ENCODE measurements at regions of chr12 and their contacts with region 1.

Region 1: GRCh38 chr12:52156736-52157565 is 34.9 kb downstream of the KRT80 start:
- DNase-seq: peak; percentile 86
- ATAC-seq: peak; percentile 74

Region 2: DNA sequence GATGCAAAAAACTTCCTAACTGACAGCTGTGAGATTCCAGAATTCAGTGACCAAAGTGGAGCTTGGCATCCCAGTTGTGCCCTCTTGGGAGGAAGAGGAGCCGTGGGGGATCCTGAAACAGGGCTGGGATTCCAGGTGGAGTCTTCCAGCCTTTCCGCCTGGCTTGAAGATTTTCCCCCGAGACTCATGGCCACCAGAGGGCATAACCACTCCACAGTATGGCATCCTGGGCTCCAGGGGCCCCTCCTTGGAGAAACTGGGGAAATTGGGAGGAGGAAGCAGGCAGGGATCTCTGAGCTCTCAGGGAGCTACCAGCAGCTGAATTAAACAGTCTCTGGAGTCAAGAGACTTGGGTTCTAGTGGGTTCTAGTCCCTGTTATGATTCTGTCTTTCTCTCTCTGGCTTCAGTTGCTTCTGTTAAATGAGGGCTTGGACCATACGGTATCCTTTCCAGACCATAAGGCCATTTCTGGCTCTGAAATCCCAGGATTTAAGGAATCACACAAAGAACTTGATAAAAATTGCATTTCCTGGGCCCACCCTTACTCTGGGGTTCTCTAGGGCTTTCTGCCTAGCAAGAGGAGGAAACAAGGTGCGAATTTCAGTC is 152.8 kb before region 1 on chr12:
- intact Hi-C with region 1: no loop called
- DNase-seq: peak; percentile 63
- ATAC-seq: peak; percentile 20

Region 3: GRCh38 chr12:52278541-52279421 is 121.8 kb after region 1 on chr12:
- intact Hi-C with region 1: loop called (anchors 5 kb)
- DNase-seq: peak; percentile 88
- ATAC-seq: peak; percentile 95

Region 4: DNA sequence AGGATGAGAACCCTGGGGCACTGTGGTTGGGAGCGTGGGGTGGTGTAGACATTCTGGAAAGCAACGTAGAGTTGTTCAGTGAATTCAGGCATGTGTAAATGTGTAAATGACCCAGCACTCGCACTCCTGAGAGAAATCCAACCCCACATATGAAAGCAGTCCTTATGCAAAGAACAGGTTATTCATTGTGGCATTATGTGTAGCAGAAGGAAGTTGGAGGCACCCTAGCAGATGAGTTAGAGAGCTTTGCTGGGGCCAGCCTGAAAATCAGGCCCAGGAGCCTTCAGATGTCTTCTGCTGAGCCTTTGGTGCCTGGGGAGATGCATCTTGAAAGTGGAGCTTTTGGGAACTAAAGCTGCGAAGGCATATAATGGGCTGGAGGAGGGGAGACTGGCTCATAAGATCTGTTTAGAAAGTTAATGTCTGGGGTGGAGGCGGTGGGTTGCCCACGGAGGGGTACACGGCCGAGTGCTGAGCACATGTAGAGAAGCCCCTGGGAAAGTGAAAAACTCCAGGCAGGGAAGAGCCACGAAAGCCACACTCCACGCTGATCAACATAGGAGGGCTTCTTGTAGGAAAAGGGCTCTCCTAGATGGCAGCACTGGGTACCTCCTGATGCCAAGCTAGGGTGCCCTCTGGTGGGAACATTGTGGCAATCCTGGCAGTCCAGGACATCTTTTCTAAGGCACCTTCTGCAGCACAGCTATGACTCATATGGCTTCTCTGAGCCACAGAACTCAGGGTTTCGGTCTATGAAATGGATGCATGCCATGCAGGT is 170.3 kb after region 1 on chr12:
- intact Hi-C with region 1: loop called (anchors 5 kb)
- DNase-seq: peak; percentile 58
- ATAC-seq: peak; percentile 96

Region 5: GRCh38 chr12:52506858-52507715 is 350.1 kb after region 1 on chr12:
- intact Hi-C with region 1: loop called (anchors 10 kb)
- DNase-seq: no peak
- ATAC-seq: peak; percentile 68

Region 6: GRCh38 chr12:52667511-52667910 is 510.6 kb after region 1 on chr12:
- intact Hi-C with region 1: no loop called
- DNase-seq: no peak
- ATAC-seq: no peak

Region 7: GRCh38 chr12:52879394-52880351 is 722.7 kb after region 1 on chr12:
- intact Hi-C with region 1: loop called (anchors 10 kb)
- DNase-seq: peak; percentile 84
- ATAC-seq: peak; percentile 89